OCI-LY7 (cell line): ENCODE measurements at regions of chr12 and their contacts with region 1.

Region 1: GRCh38 chr12:949453-950191 is at the start of gene RAD52:
- DNase-seq: peak; percentile 99
- H3K4me3 ChIP-seq: peak within 1 kb of the TSS; percentile 75
- H3K27ac ChIP-seq: peak within 1 kb of the TSS; percentile 84
- H3K4me1 ChIP-seq: peaks cover 21% of the 10 kb centered on the region
- CTCF ChIP-seq: peak; percentile 90
- total RNA-seq, gene RAD52: 30.8 and 31.8 TPM in 2 replicates

Region 2: DNA sequence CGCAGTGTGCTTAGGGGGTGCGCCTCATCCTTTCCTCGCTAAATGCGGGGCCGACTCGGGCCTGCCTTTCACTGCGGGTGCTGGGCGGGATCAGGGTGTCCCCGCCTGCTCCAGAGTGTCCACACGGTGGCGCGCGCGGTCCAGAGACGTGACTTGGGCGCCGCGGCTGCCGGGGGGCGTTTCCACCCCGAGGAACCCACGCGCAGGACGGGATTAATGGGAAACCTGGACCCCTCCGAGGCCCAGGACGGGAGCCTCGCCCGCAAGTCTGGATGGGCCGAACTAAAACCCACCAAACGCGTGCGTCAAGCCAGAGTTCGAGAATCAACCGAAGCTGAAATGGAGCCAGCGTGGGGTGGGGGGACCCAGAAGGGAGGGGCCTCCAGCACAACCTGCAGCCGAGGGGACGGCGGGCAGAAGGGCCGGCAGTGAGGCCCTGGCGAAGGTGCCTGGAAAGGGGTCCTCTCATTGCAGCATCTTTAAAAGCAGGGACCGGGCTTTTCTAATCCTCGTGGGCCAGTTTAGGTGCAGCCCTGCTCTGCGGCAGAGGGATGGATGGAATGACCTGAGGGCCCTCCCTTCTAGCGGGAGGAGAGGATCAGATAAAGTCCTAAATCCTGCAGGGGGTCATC is 379.7 kb before region 1 on chr12:
- CTCF ChIA-PET with region 1: interaction called, 5 read pairs
- POLR2A ChIA-PET with region 1: no interaction called
- intact Hi-C with region 1: loop called (anchors 1 kb)
- DNase-seq: peak; percentile 83
- H3K4me3 ChIP-seq: peak overlapping the region; percentile 69
- H3K27ac ChIP-seq: no peak overlapping the region
- H3K4me1 ChIP-seq: peaks cover 9% of the 10 kb centered on the region
- CTCF ChIP-seq: peak; percentile 97

Region 3: GRCh38 chr12:614411-614970 is 335.1 kb before region 1 on chr12:
- CTCF ChIA-PET with region 1: interaction called, 4 read pairs
- POLR2A ChIA-PET with region 1: interaction called, 3 read pairs
- intact Hi-C with region 1: loop called (anchors 1 kb)
- DNase-seq: peak; percentile 70
- H3K4me3 ChIP-seq: no peak overlapping the region
- H3K27ac ChIP-seq: no peak overlapping the region
- H3K4me1 ChIP-seq: peaks cover 15% of the 10 kb centered on the region
- CTCF ChIP-seq: peak; percentile 82

Region 4: DNA sequence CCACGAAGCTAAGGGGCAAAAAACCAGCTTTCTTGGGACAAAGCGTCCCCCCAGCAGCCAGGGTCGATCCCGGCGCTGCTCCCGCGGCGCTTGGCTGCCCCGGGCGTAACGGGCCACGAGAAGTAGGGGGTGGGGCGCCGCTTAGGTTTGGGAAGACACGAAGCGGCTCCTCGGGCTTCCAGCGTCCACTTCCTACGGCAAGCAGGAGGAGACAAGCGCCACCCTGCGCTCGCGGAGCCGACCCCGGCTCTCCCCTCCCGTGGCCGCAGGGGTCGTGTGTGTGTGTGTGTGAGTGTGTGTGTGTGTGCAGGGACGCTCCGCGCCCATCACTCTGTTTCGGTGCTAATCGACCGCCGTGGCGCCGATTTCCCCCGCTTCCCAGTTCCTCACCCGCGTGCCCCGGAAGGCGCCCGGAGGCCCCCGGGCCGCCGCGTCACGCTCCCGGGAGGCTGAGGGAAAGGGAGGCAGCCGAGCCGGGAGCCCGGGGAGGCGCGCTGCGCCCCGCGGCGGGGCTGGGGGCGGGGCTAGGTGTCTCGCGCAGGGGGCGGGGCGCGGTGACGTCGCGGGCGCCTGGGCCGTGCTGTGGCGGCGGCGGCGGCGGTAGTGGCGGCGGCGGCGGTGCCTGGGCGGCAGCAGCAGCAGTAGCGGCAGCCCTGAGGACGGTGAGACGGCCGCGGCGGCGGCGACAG is 41.2 kb after region 1 on chr12 and contains the start of gene ERC1:
- CTCF ChIA-PET with region 1: interaction called, 4 read pairs
- POLR2A ChIA-PET with region 1: interaction called, 4 read pairs
- intact Hi-C with region 1: loop called (anchors 2 kb)
- DNase-seq: peak; percentile 88
- H3K4me3 ChIP-seq: peak within 1 kb of the TSS; percentile 87
- H3K27ac ChIP-seq: peak within 1 kb of the TSS; percentile 66
- H3K4me1 ChIP-seq: peaks cover 38% of the 10 kb centered on the region
- CTCF ChIP-seq: peak; percentile 44
- total RNA-seq, gene ERC1: 26.9 and 37.0 TPM in 2 replicates

Region 5: GRCh38 chr12:1594261-1595025 is 644.8 kb after region 1 on chr12 and contains the start of gene FBXL14:
- CTCF ChIA-PET with region 1: no interaction called
- POLR2A ChIA-PET with region 1: no interaction called
- intact Hi-C with region 1: loop called (anchors 5 kb)
- DNase-seq: peak; percentile 97
- H3K4me3 ChIP-seq: peak within 1 kb of the TSS; percentile 86
- H3K27ac ChIP-seq: peak within 1 kb of the TSS; percentile 80
- H3K4me1 ChIP-seq: peaks cover 38% of the 10 kb centered on the region
- CTCF ChIP-seq: no peak
- total RNA-seq, gene FBXL14: 45.5 and 46.2 TPM in 2 replicates